Endothelial cell of umbilical vein (primary cell): ENCODE measurements at regions of chr17 and their contacts with region 1.

Region 1: GRCh38 chr17:42609182-42609813 is at the starts of genes RETREG3 and TUBG1:
- DNase-seq: peak; percentile 99
- H3K4me3 ChIP-seq: peak within 1 kb of the TSS; percentile 73 to 81 (median 79)
- H3K27ac ChIP-seq: peak within 1 kb of the TSS; percentile 69
- H3K4me1 ChIP-seq: peaks cover 11% of the 10 kb centered on the region
- H3K27me3 ChIP-seq: no peaks in the 10 kb centered on the region
- CTCF ChIP-seq: peak; percentile 39 to 72
- POLR2A ChIP-seq: peak; percentile 89
- total RNA-seq, gene RETREG3: 52.3 and 53.4 TPM in 2 replicates
- total RNA-seq, gene TUBG1: 96.9 and 102 TPM in 2 replicates

Region 2: GRCh38 chr17:42659079-42659931 is 50.0 kb after region 1 on chr17 and contains the start of gene TUBG2:
- CTCF ChIA-PET with region 1: interaction called, 5 read pairs
- POLR2A ChIA-PET with region 1: no interaction called
- dilution Hi-C with region 1: no loop called
- intact Hi-C with region 1: loop called (anchors 5 kb)
- DNase-seq: peak; percentile 92
- H3K4me3 ChIP-seq: peak within 1 kb of the TSS; percentile 2 to 51 (median 40)
- H3K27ac ChIP-seq: no peak within 1 kb of the TSS
- H3K4me1 ChIP-seq: peaks cover 17% of the 10 kb centered on the region
- H3K27me3 ChIP-seq: no peaks in the 10 kb centered on the region
- CTCF ChIP-seq: no peak
- POLR2A ChIP-seq: peak; percentile 86
- total RNA-seq, gene TUBG2: 13.1 and 13.2 TPM in 2 replicates

Region 3: GRCh38 chr17:42667123-42667951 is 58.0 kb after region 1 on chr17:
- CTCF ChIA-PET with region 1: interaction called, 4 read pairs
- POLR2A ChIA-PET with region 1: interaction called, 10 read pairs
- dilution Hi-C with region 1: no loop called
- intact Hi-C with region 1: no loop called
- DNase-seq: peak; percentile 49
- H3K4me3 ChIP-seq: no peak overlapping the region
- H3K27ac ChIP-seq: no peak overlapping the region
- H3K4me1 ChIP-seq: peaks cover 7% of the 10 kb centered on the region
- H3K27me3 ChIP-seq: no peaks in the 10 kb centered on the region
- CTCF ChIP-seq: no peak
- POLR2A ChIP-seq: no peak